Panc1 (cell line): ENCODE measurements at regions of chr11 and their contacts with region 1.

Region 1: GRCh38 chr11:96389720-96390487 is at the starts of genes CCDC82 and JRKL:
- DNase-seq: peak; percentile 79
- ATAC-seq: peak; percentile 98
- H3K4me3 ChIP-seq: peak within 1 kb of the TSS; percentile 81 to 84
- H3K27ac ChIP-seq: peak within 1 kb of the TSS; percentile 92
- H3K4me1 ChIP-seq: peaks cover 24% of the 10 kb centered on the region
- H3K27me3 ChIP-seq: no peaks in the 10 kb centered on the region
- CTCF ChIP-seq: no peak
- total RNA-seq, gene CCDC82: 25.3 TPM
- total RNA-seq, gene JRKL: 9.6 TPM

Region 2: DNA sequence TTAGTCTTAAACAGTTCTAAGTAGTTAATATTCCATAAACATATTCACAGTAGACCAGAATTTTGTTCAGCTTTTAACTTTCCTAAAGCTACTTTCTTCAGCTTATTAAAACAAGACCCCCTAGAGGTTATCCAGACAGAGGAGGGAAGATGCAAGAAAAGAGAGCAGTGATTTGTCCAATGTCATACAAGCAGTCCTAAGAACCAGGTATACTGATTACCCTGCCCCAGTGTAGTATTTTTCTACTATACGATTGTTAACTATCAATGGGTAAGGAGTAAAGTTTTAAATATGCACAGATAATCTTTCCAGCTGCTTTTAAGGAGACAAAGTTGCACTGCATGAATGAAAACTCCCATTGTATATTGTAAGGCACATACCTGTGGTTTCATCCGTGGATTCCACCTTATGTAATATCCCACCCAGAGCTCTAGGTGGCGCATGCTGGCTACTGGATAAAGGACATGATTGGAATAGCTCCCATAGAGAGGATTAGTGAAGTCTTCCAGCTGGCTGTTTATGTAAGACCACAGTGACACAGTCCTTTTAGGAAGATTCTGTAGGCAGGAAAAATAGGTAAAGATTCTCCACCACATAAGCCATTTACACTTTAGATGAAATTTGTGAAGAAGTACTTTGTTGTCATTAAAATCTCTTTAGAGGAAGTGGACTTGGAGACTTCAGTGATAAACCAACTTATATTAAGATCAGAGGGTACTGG is 554.0 kb before region 1 on chr11:
- CTCF ChIA-PET with region 1: interaction called, 7 read pairs
- POLR2A ChIA-PET with region 1: no interaction called
- in situ Hi-C with region 1: no loop called
- intact Hi-C with region 1: loop called (anchors 10 kb)
- DNase-seq: peak; percentile 58
- ATAC-seq: peak; percentile 96
- H3K4me3 ChIP-seq: no peak overlapping the region
- H3K27ac ChIP-seq: no peak overlapping the region
- H3K4me1 ChIP-seq: 0 out of 2 replicates have a peak, but pooled peaks cover 4% of the 10 kb centered on the region
- H3K27me3 ChIP-seq: no peaks in the 10 kb centered on the region
- CTCF ChIP-seq: peak; percentile 95

Region 3: DNA sequence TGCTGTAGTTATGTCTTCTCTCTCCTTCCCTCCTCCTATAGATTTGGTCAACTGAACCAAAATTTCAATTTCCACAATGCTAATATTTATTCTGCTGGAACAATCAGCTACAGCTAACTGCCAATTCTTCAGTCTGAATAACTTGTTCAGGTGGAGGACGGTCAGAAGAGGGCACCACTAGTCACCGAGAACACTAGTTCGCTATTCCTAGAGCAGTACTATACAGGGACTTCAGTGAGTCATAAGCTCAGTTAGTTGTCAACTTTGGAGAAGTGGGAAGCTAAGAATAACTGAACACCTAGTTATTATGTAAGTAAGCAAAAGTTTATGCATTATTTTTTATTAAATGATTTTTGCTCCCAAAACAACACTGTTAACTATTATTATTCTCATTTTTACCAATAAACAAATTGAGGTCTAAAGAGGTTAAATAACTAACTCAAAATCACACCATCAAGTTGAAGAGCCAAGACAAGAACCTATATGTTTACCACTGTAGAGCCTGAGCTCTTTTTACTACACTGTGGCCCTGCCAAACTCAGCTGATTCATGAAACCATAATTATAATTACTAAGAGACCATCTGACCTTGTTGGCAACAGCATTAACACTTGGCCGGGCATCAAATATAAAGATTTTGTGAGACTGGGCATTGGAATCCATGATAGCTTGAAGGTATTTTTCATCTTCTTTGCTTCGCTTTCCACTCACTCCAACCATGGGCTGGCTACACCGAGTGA is 540.6 kb before region 1 on chr11:
- CTCF ChIA-PET with region 1: interaction called, 10 read pairs
- POLR2A ChIA-PET with region 1: no interaction called
- in situ Hi-C with region 1: no loop called
- intact Hi-C with region 1: no loop called
- DNase-seq: peak; percentile 39
- ATAC-seq: peak; percentile 90
- H3K4me3 ChIP-seq: no peak overlapping the region
- H3K27ac ChIP-seq: no peak overlapping the region
- H3K4me1 ChIP-seq: 0 out of 2 replicates have a peak, but pooled peaks cover 3% of the 10 kb centered on the region
- H3K27me3 ChIP-seq: no peaks in the 10 kb centered on the region
- CTCF ChIP-seq: peak; percentile 72

Region 4: GRCh38 chr11:96054870-96055705 is 334.8 kb before region 1 on chr11:
- CTCF ChIA-PET with region 1: interaction called, 3 read pairs
- POLR2A ChIA-PET with region 1: no interaction called
- in situ Hi-C with region 1: no loop called
- intact Hi-C with region 1: loop called (anchors 10 kb)
- DNase-seq: peak; percentile 36
- ATAC-seq: peak; percentile 75
- H3K4me3 ChIP-seq: no peak overlapping the region
- H3K27ac ChIP-seq: no peak overlapping the region
- H3K4me1 ChIP-seq: no peaks in the 10 kb centered on the region
- H3K27me3 ChIP-seq: no peaks in the 10 kb centered on the region
- CTCF ChIP-seq: peak; percentile 74; the same call in 1 of the 2 replicates